Dorsolateral prefrontal cortex (tissue), 120 donors: ENCODE measurements at regions of chr4 and their contacts with region 1.

Region 1: DNA sequence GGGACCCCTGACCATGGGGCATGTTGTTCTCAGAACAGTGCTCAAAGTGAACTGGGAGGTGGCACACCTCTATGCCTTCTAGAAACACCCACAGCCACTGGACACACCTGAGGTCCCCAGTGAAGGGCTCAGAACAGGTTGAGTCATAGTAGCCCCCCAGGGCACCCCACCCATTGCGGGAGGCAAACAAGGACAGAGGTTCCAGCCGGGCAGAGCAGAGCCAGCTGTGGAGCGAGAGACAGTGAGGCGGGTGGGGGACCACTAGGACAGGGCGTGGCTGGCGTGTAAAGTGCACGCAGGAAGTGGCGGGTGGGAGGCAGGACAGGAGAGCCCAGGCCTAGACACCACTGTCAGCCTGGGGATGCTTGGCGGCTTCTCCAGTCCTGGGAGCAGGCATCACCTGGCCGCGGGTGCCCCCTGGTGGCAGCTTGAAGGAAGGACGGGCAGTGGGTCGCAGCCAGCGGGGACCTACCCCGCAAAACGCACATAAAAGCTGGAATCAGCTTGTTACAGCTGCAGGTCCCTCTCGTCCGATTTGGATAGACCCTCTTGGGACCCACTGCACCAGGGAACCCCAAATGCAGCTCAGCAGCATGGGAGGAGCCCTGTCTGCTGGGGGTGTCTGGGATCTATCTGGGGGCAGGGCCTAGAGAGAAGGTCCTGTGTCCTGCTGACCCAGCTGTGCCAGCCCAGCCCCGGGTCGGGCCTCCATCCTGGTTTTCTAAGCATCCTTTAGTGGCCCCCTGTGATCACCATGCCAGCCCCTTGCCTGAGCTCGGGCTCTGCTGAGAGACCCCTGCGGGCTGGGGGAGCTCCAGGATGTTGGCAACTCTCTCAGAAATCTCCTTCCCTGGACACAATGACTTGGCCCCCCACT is 57.6 kb downstream of the WFS1 start:
- DNase-seq: peak; percentile 77 to 91 (median 84)
- H3K4me3 ChIP-seq: no peak overlapping the region
- H3K27ac ChIP-seq: peak overlapping the region in 29 of 59 donors; percentile 1 to 71 (median 31)
- H3K27me3 ChIP-seq: no peaks in the 10 kb centered on the region
- CTCF ChIP-seq: peak; percentile 89 to 100 (median 99)

Region 2: DNA sequence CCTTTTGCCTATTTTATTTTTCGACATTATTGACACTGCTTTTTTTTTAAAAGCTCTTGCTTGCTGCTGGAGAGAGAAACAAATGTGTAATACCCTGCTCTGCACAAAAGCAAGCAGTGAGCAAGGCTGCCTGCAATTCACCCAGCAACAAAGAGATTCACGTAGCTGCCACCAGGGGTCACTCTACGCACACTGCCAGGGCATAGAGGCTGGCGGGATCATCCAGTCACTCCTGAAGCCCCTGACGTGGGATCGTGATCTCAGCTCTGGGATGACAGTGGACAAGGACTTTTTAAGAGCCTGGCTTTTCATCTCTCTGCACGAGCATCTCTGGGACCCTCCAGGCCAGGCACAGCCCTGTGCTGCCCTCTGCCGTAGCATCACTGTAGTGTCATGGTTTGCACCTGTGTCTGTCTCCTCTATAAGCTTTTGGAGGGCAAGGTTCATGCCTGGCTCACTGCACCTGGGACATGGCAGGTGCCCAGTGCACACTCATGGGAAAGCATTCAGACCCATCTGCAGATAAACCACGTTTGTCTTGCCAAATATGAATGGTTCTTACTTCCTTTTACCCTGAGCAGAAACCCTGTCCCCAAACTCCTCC is 328.8 kb before region 1 on chr4:
- intact Hi-C with region 1: loop called (anchors 2 to 5 kb)
- DNase-seq: peak; percentile 54 to 80 (median 76)
- H3K4me3 ChIP-seq: peak overlapping the region in 1 of 59 donors; percentile 7
- H3K27ac ChIP-seq: no peak overlapping the region
- H3K27me3 ChIP-seq: no peaks in the 10 kb centered on the region
- CTCF ChIP-seq: peak; percentile 71 to 98 (median 91)

Region 3: DNA sequence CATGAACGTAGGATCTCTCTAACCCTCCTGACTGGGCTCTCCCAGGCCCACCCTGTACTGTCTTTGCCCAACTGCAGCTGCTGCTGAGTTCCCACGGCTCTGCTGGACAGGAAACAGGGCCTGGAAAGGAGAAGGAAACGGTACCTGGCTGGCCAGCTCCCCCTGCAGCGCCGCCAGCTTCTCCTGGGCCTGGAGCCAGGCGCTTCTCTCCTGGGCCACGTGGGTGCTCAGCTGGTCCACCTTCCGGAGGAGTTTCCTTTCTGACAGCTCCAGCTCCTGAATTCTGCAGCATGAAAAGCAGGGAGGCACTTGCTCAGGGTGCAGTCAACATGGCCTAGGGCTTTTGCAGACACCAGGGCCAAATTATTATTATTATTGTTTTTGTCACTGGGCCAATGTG is 315.6 kb before region 1 on chr4:
- intact Hi-C with region 1: no loop called
- DNase-seq: peak; percentile 27 to 83 (median 70)
- H3K4me3 ChIP-seq: peak overlapping the region in 27 of 59 donors; percentile 3 to 43 (median 24)
- H3K27ac ChIP-seq: peak overlapping the region in 5 of 59 donors; percentile 9 to 46 (median 18)
- H3K27me3 ChIP-seq: peaks cover 0 to 17% (median 0%) of the 10 kb centered on the region in 45 donors
- CTCF ChIP-seq: peak in 1 of 56 donors; percentile 12

Region 4: DNA sequence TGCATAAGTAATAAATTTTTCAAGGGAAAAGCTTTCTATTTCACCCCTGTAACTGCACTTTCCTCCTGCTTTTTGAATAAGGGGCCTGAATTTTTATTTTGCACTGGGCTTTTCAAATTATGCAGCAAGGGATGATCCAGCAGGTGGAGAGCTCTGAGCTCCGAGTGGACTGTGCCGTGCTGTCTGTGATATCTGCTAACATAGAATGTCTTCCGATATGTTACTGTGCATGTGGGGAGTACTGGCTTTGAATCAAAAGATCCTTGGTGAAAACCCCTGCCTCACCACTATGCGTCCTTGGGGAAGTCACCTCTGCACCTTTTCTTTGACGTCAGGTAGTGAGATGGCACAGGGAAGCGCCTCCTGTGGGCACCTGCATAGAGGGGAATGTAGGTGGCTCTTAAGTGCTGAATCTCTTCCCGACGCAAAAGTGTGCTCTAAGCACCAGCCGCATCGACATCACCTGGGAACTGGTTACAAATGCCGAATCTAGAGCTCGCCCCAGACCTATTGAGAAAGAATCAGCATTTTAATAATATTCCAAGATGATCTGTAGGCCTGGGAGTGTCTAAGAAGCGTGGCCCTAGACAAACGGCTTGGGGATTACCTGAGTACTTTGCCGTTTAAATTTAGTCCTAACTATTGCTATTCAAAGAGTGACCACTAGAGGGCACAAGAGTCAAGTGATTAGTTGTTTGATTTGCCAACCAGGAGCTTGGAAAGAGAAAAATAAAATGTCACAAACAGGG is 76.9 kb before region 1 on chr4:
- intact Hi-C with region 1: loop called (anchors 1 to 2 kb)
- DNase-seq: peak in 1 of 10 donors; percentile 37
- H3K4me3 ChIP-seq: peak overlapping the region in 26 of 59 donors; percentile 3 to 44 (median 21)
- H3K27ac ChIP-seq: peak overlapping the region in 7 of 59 donors; percentile 12 to 65 (median 27)
- H3K27me3 ChIP-seq: no peaks in the 10 kb centered on the region
- CTCF ChIP-seq: peak; percentile 77 to 96 (median 88)

Region 5: DNA sequence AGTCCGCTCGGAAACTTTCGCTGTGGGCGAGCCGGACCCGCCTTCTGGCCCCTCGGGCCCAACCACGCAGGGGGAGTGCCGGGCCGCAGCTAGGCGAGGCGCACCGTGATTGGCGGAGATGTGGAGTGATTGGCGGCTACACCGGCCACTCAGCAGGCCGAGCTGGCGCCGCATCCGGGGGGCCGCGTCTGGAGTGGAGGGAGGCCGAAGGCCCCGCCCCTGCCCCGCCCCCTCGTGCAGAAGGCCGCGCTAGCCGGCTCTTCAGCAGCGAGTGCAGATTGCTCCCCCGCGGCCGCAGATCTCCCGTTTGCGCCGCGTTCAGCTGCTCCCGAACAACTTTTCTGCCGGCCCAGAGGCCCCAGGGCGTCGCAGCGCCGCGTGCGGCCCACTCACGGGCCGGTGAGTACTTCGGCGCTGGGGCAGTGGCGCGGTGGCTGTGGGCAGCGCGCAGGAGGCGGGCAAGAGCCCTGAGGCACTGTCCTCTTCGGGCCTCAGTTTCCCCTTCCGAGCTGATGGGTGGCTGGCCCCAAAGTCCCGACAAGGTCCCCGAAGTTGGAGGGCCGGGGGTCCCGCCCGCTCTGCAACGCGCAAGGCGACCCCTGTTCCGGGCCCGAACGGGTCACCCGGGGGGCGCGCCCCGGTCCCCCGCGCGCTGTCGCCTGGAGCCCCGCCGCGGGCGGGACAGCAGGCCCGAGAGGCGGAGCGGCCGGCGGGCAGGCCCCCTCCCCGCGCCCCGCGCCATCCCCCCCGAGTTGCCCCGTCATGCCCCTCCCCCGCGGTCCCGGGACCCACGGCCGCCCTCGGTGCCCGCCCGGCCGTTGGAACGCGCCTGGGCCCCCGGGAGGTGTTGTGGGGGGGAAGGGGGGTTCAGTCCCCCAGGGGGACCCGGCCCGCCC is 57.4 kb before region 1 on chr4 and contains the start of gene WFS1:
- intact Hi-C with region 1: loop called (anchors 5 kb)
- DNase-seq: peak; percentile 96 to 99 (median 98)
- H3K4me3 ChIP-seq: peak within 1 kb of the TSS; percentile 56 to 100 (median 93)
- H3K27ac ChIP-seq: peak within 1 kb of the TSS in 53 of 59 donors; percentile 29 to 89 (median 72)
- H3K27me3 ChIP-seq: no peaks in the 10 kb centered on the region
- CTCF ChIP-seq: peak in 27 of 56 donors; percentile 3 to 42 (median 19)
- total RNA-seq, gene WFS1: 39.0 to 119 (median 62.4) TPM

Region 6: DNA sequence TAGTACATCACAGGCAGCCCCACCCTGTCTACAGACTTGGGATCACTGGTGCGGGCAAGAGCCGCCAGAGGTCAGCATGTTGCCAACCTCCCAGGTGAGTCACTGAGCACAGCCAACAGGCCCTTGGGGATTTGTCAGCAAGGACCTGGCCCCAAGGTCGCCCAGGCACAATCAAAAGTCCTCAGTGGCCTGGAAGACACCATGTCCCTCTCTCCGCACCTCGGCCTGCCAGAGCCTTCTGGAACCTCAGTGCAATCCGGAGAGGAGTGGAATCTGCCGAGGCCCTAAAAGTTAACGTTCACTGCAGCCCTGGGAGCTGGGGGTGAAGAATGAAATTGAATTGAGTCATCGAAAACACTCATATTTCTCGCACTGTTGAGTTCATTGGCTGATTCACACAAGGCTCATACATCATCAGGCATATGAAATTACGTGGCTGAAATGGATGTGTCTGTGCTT is 16.7 kb after region 1 on chr4:
- intact Hi-C with region 1: no loop called
- DNase-seq: peak in 2 of 10 donors; percentile 42 to 48
- H3K4me3 ChIP-seq: no peak overlapping the region
- H3K27ac ChIP-seq: peak overlapping the region in 50 of 59 donors; percentile 7 to 92 (median 76)
- H3K27me3 ChIP-seq: no peaks in the 10 kb centered on the region
- CTCF ChIP-seq: no peak

Region 7: GRCh38 chr4:6470502-6471306 is 143.4 kb after region 1 on chr4:
- intact Hi-C with region 1: loop called (anchors 5 kb)
- DNase-seq: peak in 9 of 10 donors; percentile 68 to 91 (median 80)
- H3K4me3 ChIP-seq: peak overlapping the region; percentile 52 to 85 (median 74)
- H3K27ac ChIP-seq: peak overlapping the region; percentile 85 to 100 (median 97)
- H3K27me3 ChIP-seq: no peaks in the 10 kb centered on the region
- CTCF ChIP-seq: peak in 1 of 56 donors; percentile 13

Region 8: DNA sequence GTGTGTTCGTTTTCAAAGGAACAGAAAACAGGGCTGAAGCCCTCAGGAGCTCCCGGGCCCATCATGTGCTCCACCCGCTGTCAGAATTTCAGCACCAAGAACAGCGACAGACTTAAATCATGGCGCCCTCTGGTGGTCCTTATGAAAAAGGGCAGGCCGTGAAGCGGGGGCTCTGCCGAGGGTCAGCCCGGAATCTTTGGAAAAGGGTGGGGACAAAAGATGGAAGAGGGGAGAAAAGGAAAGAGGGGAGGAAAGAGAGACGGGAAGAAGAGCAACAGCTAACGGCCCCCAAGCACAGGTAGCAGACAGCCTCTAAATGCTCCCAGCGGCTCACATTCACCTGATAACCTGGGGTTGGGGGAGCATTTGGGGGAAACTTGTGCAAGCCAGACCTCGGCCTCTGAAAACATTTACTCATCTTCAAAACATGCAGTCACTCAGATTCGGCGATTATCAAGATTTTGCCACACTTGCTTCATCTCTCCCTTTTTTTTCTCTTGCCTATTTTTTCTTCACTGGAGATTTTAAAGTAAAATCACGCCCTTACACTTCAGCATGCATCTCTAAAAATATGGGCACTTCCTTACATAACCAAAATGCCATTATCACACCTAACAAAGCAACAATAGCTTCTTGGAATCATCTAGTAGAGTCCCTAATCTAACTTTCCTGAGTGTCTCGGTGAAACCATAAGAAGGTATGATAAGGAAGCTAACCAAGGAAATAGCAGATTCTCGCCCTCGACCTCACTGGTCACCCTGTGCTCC is 219.6 kb after region 1 on chr4:
- intact Hi-C with region 1: loop called (anchors 2 to 5 kb)
- DNase-seq: peak in 5 of 10 donors; percentile 49 to 70 (median 63)
- H3K4me3 ChIP-seq: peak overlapping the region in 3 of 59 donors; percentile 3 to 30 (median 26)
- H3K27ac ChIP-seq: peak overlapping the region in 52 of 59 donors; percentile 8 to 88 (median 69)
- H3K27me3 ChIP-seq: peaks cover 0 to 14% (median 0%) of the 10 kb centered on the region in 45 donors
- CTCF ChIP-seq: peak; percentile 78 to 96 (median 92)